ENCODE measurements at regions of chr6 and their contacts with region 1.

Region 1: GRCh38 chr6:138588805-138589434 is 89.6 kb upstream of the NHSL1 start:
- DNase-seq: peak; percentile 61 to 71 (median 65)
- H3K4me3 ChIP-seq: no peak overlapping the region
- H3K4me3 Mint-ChIP-seq: no peak overlapping the region
- H3K27ac ChIP-seq: no peak overlapping the region
- H3K27ac Mint-ChIP-seq: no peak overlapping the region
- H3K4me1 ChIP-seq: peaks cover 17 to 18% of the 10 kb centered on the region in 2 donors
- H3K4me1 Mint-ChIP-seq: peaks cover 20% of the 10 kb centered on the region
- H3K27me3 ChIP-seq: peaks cover 0 to 12% of the 10 kb centered on the region in 2 donors
- H3K27me3 Mint-ChIP-seq: peaks cover 12 to 20% (median 13%) of the 10 kb centered on the region in 3 donors
- CTCF ChIP-seq: peak; percentile 92

Region 2: DNA sequence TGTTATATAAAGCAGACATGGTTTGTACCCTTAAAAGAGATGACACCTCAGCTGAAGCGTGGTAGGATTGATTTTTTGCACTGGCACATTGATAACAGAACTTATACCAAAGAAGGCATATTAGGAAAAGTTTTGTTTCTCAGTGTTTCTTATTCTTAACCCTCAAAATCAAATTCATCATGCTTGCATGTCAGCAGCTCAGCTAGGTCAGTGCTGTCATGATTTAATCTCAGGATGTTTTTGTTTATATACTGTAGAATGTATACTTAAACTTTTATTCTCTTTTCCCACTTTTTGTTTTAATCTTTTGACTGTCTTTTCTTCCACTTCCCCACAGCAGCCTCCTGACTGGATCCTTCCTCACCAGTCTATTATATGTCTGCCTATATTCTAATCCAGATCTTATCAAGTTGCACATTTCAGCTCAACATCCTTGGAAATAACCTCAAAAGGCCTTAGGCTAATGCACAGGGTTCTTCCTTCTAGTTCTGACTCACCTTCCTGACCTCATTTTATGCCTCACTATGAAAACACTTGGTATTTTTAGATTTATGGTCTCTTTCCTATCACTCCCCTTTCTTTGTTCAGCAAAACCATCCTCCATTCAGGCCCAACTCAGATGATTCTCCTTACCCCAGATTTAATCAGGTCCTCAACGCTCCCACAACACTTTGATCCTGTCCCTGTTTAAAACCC is 177.8 kb before region 1 on chr6:
- intact Hi-C with region 1: loop called in 1 of 2 experiments (anchors 10 kb)
- DNase-seq: peak; percentile 18 to 67 (median 38)
- H3K4me3 ChIP-seq: peak overlapping the region in 1 of 3 experiments; percentile 24
- H3K4me3 Mint-ChIP-seq: peak overlapping the region in 1 of 2 donors; percentile 35
- H3K27ac ChIP-seq: peak overlapping the region in 1 of 2 donors; percentile 72
- H3K27ac Mint-ChIP-seq: peak overlapping the region; percentile 58 to 93 (median 90)
- H3K4me1 ChIP-seq: peaks cover 26 to 53% of the 10 kb centered on the region in 2 donors
- H3K4me1 Mint-ChIP-seq: peaks cover 46% of the 10 kb centered on the region
- H3K27me3 ChIP-seq: no peaks in the 10 kb centered on the region
- H3K27me3 Mint-ChIP-seq: no peaks in the 10 kb centered on the region
- CTCF ChIP-seq: no peak

Region 3: GRCh38 chr6:138545621-138545980 is 43.3 kb before region 1 on chr6:
- intact Hi-C with region 1: no loop called
- DNase-seq: no peak
- H3K4me3 ChIP-seq: no peak overlapping the region
- H3K4me3 Mint-ChIP-seq: no peak overlapping the region
- H3K27ac ChIP-seq: no peak overlapping the region
- H3K27ac Mint-ChIP-seq: no peak overlapping the region
- H3K4me1 ChIP-seq: no peaks in the 10 kb centered on the region
- H3K4me1 Mint-ChIP-seq: peaks cover 3% of the 10 kb centered on the region
- H3K27me3 ChIP-seq: no peaks in the 10 kb centered on the region
- H3K27me3 Mint-ChIP-seq: peaks cover 0 to 4% (median 0%) of the 10 kb centered on the region in 3 donors
- CTCF ChIP-seq: no peak

Region 4: GRCh38 chr6:138692058-138692977 is 103.4 kb after region 1 on chr6:
- intact Hi-C with region 1: loop called (anchors 5 to 10 kb)
- DNase-seq: peak; percentile 28 to 53 (median 43)
- H3K4me3 ChIP-seq: peak overlapping the region; percentile 50 to 76 (median 76)
- H3K4me3 Mint-ChIP-seq: peak overlapping the region; percentile 88 to 89
- H3K27ac ChIP-seq: peak overlapping the region in 1 of 2 donors; percentile 23
- H3K27ac Mint-ChIP-seq: peak overlapping the region in 1 of 7 donors; percentile 46
- H3K4me1 ChIP-seq: peaks cover 13 to 17% of the 10 kb centered on the region in 2 donors
- H3K4me1 Mint-ChIP-seq: peaks cover 12% of the 10 kb centered on the region
- H3K27me3 ChIP-seq: peaks cover 3 to 23% of the 10 kb centered on the region in 2 donors
- H3K27me3 Mint-ChIP-seq: peaks cover 26 to 34% (median 31%) of the 10 kb centered on the region in 3 donors
- CTCF ChIP-seq: peak; percentile 100

Region 5: DNA sequence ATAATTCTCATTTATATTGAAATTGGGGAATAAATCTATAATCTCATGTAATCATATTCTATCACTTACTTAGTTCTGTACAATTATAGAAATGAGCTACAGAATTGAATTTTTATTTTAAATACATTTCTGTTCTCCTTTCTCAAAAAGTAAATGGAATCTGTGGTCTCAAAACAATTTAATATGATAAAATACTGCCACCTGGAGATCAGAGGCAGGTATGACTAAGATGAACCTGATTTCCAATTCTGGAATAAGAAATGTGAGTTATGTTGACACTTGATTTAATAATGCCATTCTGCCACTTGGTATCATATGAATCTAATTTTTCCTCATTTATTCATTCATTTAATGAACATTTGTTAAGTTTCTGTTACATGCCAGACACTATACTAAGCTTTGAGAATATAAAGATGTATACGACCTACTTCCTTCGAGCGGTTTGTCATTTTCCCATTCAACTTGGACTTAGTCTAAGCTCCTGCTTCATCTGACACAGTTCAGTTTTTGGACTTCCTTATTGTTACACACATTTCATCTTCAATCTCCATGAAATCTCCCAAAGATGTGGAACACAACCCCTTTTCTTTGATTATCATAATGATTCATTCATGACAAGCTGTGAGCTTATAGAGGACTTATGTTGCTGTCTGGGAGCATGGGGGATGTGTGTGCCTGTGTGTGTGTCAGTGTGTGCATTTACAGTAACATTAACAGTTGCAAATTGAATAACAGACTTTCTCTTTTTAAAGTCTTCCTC is 177.2 kb after region 1 on chr6:
- intact Hi-C with region 1: loop called (anchors 2 kb)
- DNase-seq: peak; percentile 25 to 48 (median 27)
- H3K4me3 ChIP-seq: no peak overlapping the region
- H3K4me3 Mint-ChIP-seq: no peak overlapping the region
- H3K27ac ChIP-seq: no peak overlapping the region
- H3K27ac Mint-ChIP-seq: peak overlapping the region in 1 of 7 donors; percentile 6
- H3K4me1 ChIP-seq: peaks cover 6 to 9% of the 10 kb centered on the region in 2 donors
- H3K4me1 Mint-ChIP-seq: peaks cover 5% of the 10 kb centered on the region
- H3K27me3 ChIP-seq: no peaks in the 10 kb centered on the region
- H3K27me3 Mint-ChIP-seq: peaks cover 0 to 2% (median 1%) of the 10 kb centered on the region in 3 donors
- CTCF ChIP-seq: peak; percentile 73

Measured in CD14-positive monocyte (primary cell).